Transverse colon (tissue), 4 donors: ENCODE measurements at regions of chr3 and their contacts with region 1.

Region 1: DNA sequence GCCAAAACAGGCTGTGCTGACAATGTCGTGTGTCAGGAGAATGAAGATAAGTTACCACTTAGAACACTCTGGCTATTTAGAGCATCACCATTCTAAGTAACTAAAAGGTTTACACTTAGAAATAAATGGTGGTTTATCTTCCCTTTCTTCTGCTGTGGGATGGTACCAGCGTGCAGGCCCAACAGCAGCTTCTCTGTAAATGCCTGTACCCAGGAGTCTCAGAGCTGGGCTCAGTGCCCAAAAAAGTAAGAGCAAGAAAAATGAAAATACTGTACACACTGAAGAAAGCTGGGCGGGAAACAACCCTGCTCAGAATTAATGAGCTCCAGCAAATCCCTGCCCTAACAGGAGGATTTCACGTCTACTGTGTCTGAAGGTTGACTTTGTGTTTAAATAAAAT is 206.5 kb downstream of the MFSD1 start:
- DNase-seq: no peak
- H3K4me3 ChIP-seq: no peak overlapping the region
- H3K27ac ChIP-seq: no peak overlapping the region
- H3K4me1 ChIP-seq: no peaks in the 10 kb centered on the region
- H3K27me3 ChIP-seq: no peaks in the 10 kb centered on the region
- CTCF ChIP-seq: no peak
- EP300 ChIP-seq: no peak
- POLR2A ChIP-seq: no peak

Region 2: GRCh38 chr3:158991146-158991705 is 17.2 kb before region 1 on chr3:
- in situ Hi-C with region 1: no loop called
- intact Hi-C with region 1: loop called (anchors 1 kb)
- DNase-seq: peak; percentile 60
- H3K4me3 ChIP-seq: no peak overlapping the region
- H3K27ac ChIP-seq: no peak overlapping the region
- H3K4me1 ChIP-seq: no peaks in the 10 kb centered on the region
- H3K27me3 ChIP-seq: no peaks in the 10 kb centered on the region
- CTCF ChIP-seq: no peak
- EP300 ChIP-seq: no peak
- POLR2A ChIP-seq: no peak